Transverse colon (tissue), 4 donors: ENCODE measurements at regions of chr11 and their contacts with region 1.

Region 1: GRCh38 chr11:81112718-81113117 is 1620.9 kb downstream of the FAM181B start:
- DNase-seq: no peak
- H3K4me3 ChIP-seq: no peak overlapping the region
- H3K27ac ChIP-seq: no peak overlapping the region
- H3K4me1 ChIP-seq: no peaks in the 10 kb centered on the region
- H3K27me3 ChIP-seq: no peaks in the 10 kb centered on the region
- CTCF ChIP-seq: no peak
- EP300 ChIP-seq: no peak
- POLR2A ChIP-seq: no peak

Region 2: DNA sequence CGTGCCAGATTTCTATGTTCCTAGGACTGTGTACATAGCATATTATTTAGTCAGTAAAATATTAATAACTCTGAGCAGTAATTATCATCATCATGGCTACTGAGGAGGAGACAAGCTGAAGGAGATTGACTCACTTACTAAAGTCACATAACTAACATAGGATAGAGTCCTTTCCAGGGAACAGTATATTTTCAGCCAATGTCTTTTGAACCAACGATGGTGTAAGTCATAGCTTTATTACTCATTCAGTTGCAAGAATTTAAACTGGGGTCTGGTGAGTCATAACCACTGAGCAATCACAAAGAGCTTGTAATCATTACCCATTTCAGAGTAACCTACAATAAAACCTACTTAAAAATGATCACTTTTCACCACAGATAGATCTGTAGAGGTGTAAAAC is 107.1 kb before region 1 on chr11:
- in situ Hi-C with region 1: loop called in 1 of 4 experiments (anchors 25 kb)
- intact Hi-C with region 1: no loop called
- DNase-seq: no peak
- H3K4me3 ChIP-seq: no peak overlapping the region
- H3K27ac ChIP-seq: no peak overlapping the region
- H3K4me1 ChIP-seq: no peaks in the 10 kb centered on the region
- H3K27me3 ChIP-seq: no peaks in the 10 kb centered on the region
- CTCF ChIP-seq: no peak
- EP300 ChIP-seq: no peak
- POLR2A ChIP-seq: no peak